BJ (cell line): ENCODE measurements at regions of chr1 and their contacts with region 1.

Region 1: GRCh38 chr1:59766227-59766855 is 48.4 kb upstream of the HOOK1 start:
- DNase-seq: no peak
- H3K4me3 ChIP-seq: no peak overlapping the region
- H3K27me3 ChIP-seq: no peaks in the 10 kb centered on the region
- CTCF ChIP-seq: no peak

Region 2: DNA sequence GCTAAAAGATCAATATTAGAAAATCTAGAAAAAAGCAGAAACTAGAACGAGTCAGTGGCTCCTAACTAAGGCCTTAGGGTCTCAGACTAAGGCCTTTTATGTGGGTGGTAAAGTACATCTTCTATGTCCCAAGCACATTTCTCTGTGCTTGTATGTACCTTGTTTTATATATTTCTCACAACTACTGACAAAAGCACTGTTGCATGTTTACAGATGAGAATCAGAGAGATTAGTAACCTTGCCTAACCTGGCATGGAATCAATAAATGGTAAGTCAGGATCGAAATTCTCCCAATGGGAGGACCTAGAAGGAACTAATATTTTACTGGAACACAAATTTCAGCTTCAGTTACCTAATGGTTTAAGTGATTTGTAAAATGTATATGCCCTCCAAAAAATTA is 308.6 kb before region 1 on chr1:
- CTCF ChIA-PET with region 1: no interaction called
- POLR2A ChIA-PET with region 1: no interaction called
- DNase-seq: no peak
- H3K4me3 ChIP-seq: no peak overlapping the region
- H3K27me3 ChIP-seq: no peaks in the 10 kb centered on the region
- CTCF ChIP-seq: no peak

Region 3: DNA sequence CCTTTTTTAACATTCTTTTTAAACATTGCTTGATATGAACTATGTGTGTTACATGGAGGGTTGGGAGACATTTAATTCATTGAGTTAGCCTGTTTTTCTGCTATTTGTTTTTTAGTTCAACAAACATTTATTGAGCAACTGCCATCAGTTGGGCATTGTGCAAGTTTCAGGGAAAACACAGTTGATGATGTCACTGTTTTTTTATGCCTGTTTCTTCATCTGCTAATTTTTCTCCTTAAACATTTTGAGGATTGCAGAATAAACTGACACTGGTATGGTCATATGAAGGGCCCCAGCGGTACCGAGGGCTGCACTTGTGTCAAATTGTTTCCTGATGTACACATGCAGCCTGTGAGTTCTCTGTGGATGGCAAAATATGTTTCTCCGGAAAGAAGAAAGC is 216.4 kb before region 1 on chr1:
- CTCF ChIA-PET with region 1: no interaction called
- POLR2A ChIA-PET with region 1: interaction called, 13 read pairs
- DNase-seq: peak; percentile 40
- H3K4me3 ChIP-seq: no peak overlapping the region
- H3K27me3 ChIP-seq: no peaks in the 10 kb centered on the region
- CTCF ChIP-seq: no peak

Region 4: GRCh38 chr1:59743324-59744091 is 22.8 kb before region 1 on chr1:
- CTCF ChIA-PET with region 1: no interaction called
- POLR2A ChIA-PET with region 1: no interaction called
- DNase-seq: no peak
- H3K4me3 ChIP-seq: no peak overlapping the region
- H3K27me3 ChIP-seq: no peaks in the 10 kb centered on the region
- CTCF ChIP-seq: no peak